Left cardiac atrium (tissue), 4 donors: ENCODE measurements at regions of chr9 and their contacts with region 1.

Region 1: GRCh38 chr9:125538092-125538473 is 168.9 kb downstream of the MAPKAP1 start:
- DNase-seq: no peak
- ATAC-seq: peak; percentile 65 to 89

Region 2: DNA sequence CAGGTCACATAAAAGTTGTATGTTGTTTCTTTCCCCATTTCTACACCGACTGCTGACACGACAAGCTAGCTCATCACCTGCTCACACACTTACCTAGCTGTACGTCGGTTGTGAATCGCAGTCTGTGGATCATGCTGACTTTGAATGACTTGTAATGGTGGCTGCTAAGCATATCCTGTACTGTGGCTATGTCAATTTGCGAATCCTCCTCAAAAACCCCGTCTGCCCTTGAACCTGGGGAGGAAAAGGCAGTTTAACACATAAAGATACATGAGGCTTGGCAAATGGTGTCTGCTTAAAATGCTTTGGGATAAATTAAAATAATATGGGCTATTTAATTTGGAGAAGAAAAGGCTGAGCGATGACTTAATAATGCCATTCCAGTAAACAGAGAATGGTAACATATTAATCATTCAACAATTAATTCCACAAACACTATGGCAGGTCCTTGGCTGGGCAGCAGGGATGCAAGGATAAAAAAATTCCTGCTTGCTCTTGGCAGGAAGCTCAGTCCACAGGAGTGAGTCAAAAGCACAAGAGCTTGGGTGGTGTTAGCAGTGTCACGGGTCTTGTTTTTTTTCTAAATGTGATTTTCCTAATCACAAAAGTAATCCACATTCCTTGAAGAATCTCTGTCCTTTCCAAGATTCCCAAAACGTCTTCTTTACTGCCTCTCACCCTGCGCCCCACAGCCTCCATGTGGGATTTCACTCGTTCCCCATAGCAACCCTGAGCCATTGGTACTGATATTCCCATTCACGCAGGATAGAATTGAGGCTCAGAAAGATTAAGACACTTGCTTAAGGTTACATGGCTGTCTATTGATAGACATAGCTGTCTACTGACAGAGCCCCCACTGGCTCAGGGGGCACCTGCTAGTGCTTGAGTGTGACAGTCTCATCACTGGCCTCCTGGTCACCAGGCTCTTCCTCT is 53.5 kb before region 1 on chr9:
- intact Hi-C with region 1: loop called in 1 of 2 experiments (anchors 10 kb)
- DNase-seq: no peak
- ATAC-seq: peak; percentile 65 to 91

Region 3: DNA sequence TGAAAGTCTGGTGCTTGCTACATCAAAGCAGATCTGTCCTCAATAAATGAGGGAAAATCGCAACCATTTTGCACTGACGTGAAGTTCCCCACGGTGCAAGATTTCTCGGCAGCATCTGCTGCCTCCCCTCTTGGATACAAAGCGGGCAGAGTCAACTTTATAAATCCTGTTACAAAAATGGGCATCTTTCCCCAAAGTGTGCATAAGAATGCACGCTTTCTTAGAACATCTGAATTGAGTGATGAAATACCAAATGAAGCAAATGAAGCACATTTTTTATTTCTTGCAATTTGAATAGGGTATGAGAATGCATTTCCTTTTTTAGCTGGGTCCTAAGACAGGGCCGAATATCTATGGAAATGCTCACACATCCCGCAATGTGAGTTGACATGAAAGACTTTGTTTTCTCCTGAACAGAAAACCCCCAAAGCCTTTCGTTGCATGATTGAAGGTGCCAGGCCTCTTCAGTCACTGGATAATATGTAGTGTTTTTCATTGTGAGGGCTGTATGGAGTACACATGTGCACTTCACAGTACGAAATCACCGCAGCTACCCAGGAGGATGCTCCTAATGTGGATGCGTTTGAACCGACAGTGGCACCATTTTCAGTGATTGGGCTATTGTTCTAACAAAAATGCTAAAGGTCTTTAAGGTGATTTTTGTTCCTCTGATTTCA is 188.5 kb after region 1 on chr9:
- intact Hi-C with region 1: no loop called
- DNase-seq: no peak
- ATAC-seq: no peak

Region 4: DNA sequence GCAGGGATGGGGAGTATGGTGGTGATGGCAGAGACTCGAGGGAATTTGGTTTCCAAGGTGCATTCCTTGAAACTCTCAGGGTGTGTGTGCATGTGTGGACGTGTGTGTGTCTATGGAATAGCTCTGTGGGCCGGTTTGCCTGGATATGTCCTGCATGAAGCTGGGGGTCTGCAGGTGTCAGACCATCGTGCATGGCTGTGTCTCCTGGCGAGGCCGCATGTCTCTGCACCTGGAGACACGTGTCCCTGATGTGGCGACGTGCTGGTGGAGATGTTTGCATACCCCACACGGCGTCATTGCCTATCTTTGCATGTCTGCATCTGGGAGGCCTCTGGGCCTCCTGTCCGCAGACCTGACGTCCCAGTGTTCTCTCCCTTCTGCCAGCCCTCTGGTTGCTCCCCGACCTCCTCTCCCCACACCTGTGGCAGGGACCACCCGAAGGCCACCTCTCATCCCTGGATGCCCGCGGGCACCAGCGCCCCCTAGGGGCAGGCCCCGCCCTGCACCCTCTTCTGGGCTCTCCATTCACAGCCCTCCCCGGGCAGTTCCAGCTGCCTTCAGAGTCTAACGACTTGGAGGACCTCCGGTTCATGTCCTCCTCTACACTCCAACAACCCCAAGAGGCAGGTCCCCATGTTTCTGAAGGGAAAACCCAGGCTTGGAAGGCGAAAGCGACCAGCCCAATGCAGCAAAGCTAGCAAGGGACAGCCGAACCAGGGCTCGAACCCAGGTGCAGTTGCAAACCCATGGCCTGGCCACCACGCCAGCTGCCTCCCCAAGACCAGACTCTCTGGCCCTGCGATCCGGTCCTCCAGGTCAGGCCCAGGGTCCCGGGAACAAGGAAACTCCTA is 1164.3 kb after region 1 on chr9:
- intact Hi-C with region 1: no loop called
- DNase-seq: peak; percentile 31
- ATAC-seq: peak in 1 of 2 donors; percentile 4